SK-N-SH (cell line): ENCODE measurements at regions of chr11 and their contacts with region 1.

Region 1: DNA sequence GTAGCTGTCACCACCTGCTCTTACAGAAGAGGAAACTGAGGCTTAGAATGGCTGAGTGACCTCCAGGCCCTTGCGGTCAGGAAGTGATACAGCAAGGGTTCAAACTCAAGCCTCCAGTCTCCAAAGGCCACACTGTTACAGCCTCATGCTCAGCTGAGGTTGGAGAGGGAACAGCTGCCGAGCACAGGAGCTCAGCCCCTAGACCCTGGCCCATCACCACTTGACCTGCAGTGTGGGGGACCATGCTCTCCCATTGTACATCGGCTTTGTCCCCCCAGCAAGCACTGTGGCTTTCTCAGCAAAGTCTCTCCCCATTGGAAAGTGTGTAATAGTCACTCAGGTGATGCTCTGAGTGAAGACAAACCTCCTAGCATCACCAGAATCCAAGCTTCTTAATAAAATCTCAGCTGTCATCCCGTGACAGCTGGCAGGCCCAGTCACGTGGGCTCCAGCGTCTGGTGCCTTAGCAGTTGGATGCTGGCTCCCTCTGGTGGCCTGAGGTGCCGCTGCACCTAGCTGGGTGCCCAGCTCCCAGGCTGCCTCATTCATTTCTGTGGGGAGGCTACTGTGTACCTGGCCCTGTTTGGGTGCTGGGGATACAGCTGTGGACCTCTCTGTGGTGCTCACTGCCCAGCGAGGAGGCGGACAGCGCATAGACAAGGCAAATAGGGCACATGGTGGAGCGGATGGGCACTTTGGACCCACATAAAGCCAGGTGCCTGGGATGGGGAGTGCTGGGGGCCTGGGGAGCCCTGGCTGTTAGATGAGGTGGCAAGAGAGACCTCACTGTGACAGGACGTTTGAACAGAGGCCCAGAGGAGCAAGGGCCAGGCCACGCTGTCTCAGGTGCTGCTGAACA is 19.1 kb upstream of the MYRF start:
- DNase-seq: peak; percentile 95
- H3K4me3 ChIP-seq: no peak overlapping the region; a peak in 1 of 4 replicates
- H3K27ac ChIP-seq: peak overlapping the region in 1 of 2 experiments; percentile 5; a peak in 1 of 4 replicates
- H3K4me1 ChIP-seq: peaks cover 0 to 5% of the 10 kb centered on the region in 2 experiments; a peak in 1 of 4 replicates
- H3K27me3 ChIP-seq: no peaks in the 10 kb centered on the region
- CTCF ChIP-seq: peak; percentile 96
- EP300 ChIP-seq: no peak
- RAD21 ChIP-seq: peak; percentile 97

Region 2: DNA sequence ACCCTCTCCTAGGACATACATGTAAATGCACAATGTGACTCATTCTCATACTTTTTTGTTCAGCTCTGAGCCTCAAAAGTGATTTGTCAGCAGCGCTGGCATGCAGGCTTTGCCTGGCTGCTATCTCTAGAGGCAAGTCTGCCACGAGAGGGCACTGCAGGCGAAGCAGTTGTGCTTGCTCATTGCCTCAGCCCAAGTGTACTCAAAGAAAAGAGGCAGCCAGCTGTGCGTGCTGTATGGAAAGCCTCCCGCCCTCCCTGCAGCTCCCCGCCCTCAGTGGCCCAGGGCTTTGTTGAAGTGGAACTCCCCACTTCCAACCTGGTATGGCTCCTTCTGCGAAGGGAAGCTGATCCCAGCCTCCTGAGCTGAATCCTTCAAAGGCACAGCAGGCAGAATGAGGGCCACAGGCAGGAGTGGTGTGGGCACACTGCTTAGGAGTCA is 287.1 kb before region 1 on chr11:
- CTCF ChIA-PET with region 1: interaction called, 18 read pairs
- POLR2A ChIA-PET with region 1: no interaction called
- DNase-seq: peak; percentile 78
- H3K4me3 ChIP-seq: no peak overlapping the region; a peak in 1 of 4 replicates
- H3K27ac ChIP-seq: peak overlapping the region; percentile 45 to 53; a peak in 3 of 4 replicates
- H3K4me1 ChIP-seq: peaks cover 5 to 13% of the 10 kb centered on the region in 2 experiments; a peak in 2 of 4 replicates
- H3K27me3 ChIP-seq: no peaks in the 10 kb centered on the region
- CTCF ChIP-seq: peak; percentile 94
- EP300 ChIP-seq: no peak
- RAD21 ChIP-seq: peak; percentile 88

Region 3: GRCh38 chr11:61645179-61645868 is 88.0 kb before region 1 on chr11:
- CTCF ChIA-PET with region 1: interaction called, 26 read pairs
- POLR2A ChIA-PET with region 1: no interaction called
- DNase-seq: peak; percentile 59
- H3K4me3 ChIP-seq: no peak overlapping the region
- H3K27ac ChIP-seq: no peak overlapping the region
- H3K4me1 ChIP-seq: peaks cover 0 to 7% of the 10 kb centered on the region in 2 experiments; a peak in 1 of 4 replicates
- H3K27me3 ChIP-seq: no peaks in the 10 kb centered on the region
- CTCF ChIP-seq: no peak
- EP300 ChIP-seq: no peak; a peak in 1 of 4 replicates
- RAD21 ChIP-seq: no peak

Region 4: DNA sequence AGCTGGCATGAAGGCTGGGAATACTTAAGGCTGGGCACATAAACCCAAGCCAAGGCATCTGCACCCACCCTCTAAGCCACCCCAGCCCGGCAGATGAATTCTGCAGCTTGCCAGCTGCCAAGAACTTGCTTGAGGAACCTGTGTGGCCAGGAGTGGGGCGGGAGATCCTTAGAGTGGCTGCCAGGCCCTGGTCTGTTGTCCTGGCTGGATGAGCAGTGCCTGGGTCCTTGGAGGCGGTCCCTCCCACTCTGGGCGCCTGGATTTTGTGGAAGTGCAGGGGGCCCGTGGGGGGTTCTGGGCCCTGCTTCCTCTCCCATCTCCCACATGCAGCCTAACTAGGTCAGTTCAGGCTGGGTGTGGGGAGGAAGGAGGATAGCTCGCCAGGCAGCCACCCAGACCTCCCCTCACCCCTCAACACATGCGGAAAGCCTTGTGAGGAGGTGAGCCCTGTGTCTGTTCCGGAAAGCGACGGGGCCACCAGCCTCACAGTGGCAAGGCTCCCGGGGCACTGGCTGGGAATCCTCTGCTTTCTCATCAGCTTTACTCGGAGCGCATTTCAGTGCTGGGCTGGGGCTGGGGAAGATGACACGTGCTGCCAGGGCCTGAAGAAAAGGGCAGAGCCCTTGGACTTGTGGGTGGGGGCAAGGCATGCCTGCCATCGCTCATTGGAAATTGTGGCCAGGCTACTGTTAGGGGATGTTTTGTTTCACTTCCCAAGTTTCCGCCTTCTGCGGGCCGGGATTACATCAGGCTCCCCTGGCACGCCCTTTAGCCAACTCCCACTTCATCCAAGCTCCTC is 44.8 kb before region 1 on chr11:
- CTCF ChIA-PET with region 1: interaction called, 20 read pairs
- POLR2A ChIA-PET with region 1: no interaction called
- DNase-seq: no peak
- H3K4me3 ChIP-seq: no peak overlapping the region
- H3K27ac ChIP-seq: no peak overlapping the region
- H3K4me1 ChIP-seq: peaks cover 0 to 16% of the 10 kb centered on the region in 2 experiments; a peak in 1 of 4 replicates
- H3K27me3 ChIP-seq: no peaks in the 10 kb centered on the region
- CTCF ChIP-seq: no peak
- EP300 ChIP-seq: no peak
- RAD21 ChIP-seq: no peak

Region 5: GRCh38 chr11:61711498-61711897 is 21.9 kb before region 1 on chr11:
- CTCF ChIA-PET with region 1: interaction called, 18 read pairs
- POLR2A ChIA-PET with region 1: no interaction called
- DNase-seq: peak; percentile 56
- H3K4me3 ChIP-seq: no peak overlapping the region
- H3K27ac ChIP-seq: peak overlapping the region in 1 of 2 experiments; percentile 48; a peak in 1 of 4 replicates
- H3K4me1 ChIP-seq: peaks cover 0 to 18% of the 10 kb centered on the region in 2 experiments; a peak in 1 of 4 replicates
- H3K27me3 ChIP-seq: no peaks in the 10 kb centered on the region
- CTCF ChIP-seq: no peak
- EP300 ChIP-seq: no peak
- RAD21 ChIP-seq: no peak

Region 6: GRCh38 chr11:61764606-61765260 is 31.4 kb after region 1 on chr11:
- CTCF ChIA-PET with region 1: interaction called, 10 read pairs
- POLR2A ChIA-PET with region 1: no interaction called
- DNase-seq: peak; percentile 88
- H3K4me3 ChIP-seq: no peak overlapping the region
- H3K27ac ChIP-seq: no peak overlapping the region; a peak in 1 of 4 replicates
- H3K4me1 ChIP-seq: peaks cover 0 to 30% of the 10 kb centered on the region in 2 experiments; a peak in 2 of 4 replicates
- H3K27me3 ChIP-seq: no peaks in the 10 kb centered on the region
- CTCF ChIP-seq: no peak
- EP300 ChIP-seq: no peak
- RAD21 ChIP-seq: 0 out of 2 replicates have a peak, but pooled peaks have one; percentile 6